Naive thymus-derived CD4-positive, alpha-beta T cell (primary cell): ENCODE measurements at regions of chr5 and their contacts with region 1.

Region 1: DNA sequence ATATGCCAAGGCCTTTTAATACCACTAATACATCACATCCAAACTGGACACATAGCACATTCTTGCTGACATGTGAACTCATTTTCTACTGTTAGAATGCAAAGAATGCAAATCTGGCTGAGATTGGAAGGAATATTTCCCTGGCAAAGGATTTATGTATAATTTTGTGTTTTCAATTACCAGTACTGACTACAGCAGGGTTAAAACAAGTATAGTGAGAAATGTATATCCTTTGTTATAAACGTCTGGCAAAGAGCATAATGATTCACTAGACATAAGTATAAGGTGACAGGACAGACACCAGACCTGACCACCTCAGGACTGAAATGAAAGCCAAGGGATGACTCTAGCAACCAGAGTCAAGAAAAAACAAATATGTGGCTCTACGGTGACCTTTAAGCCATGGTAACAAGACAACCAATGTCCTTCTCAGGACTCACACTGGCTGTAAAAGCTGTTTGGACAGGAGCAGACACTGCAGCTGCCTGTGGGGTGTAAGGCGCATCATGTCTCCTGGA is 95.0 kb downstream of the MRPS27 start:
- DNase-seq: no peak
- ATAC-seq: no peak
- H3K4me3 ChIP-seq: no peak overlapping the region
- H3K4me3 Mint-ChIP-seq: no peak overlapping the region
- H3K27ac ChIP-seq: no peak overlapping the region
- H3K27ac Mint-ChIP-seq: no peak overlapping the region
- H3K4me1 ChIP-seq: no peaks in the 10 kb centered on the region
- H3K4me1 Mint-ChIP-seq: peaks cover 0 to 5% (median 1%) of the 10 kb centered on the region in 7 donors
- H3K27me3 ChIP-seq: no peaks in the 10 kb centered on the region
- H3K27me3 Mint-ChIP-seq: no peaks in the 10 kb centered on the region

Region 2: DNA sequence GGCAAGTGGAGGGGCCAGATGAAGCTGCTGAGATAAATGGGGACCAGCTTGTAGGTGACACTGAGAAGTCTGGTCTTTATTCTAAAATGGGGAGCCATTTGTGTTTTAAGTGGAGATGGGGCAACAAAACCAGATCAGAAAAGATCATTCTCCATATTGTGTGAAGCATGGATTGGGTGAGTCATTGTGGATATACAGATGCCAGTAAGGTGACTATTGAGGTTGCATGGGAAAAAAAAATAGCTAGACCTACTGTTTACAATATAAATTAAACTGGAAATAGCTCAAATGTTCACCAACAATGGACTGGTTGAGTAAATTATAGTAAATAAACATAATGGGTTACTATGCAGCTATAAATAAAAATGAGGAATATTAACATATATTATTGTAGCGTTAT is 123.2 kb before region 1 on chr5:
- CTCF ChIA-PET with region 1: no interaction called
- POLR2A ChIA-PET with region 1: no interaction called
- intact Hi-C with region 1: loop called in 1 of 2 experiments (anchors 5 kb)
- DNase-seq: no peak
- ATAC-seq: no peak
- H3K4me3 ChIP-seq: no peak overlapping the region
- H3K4me3 Mint-ChIP-seq: no peak overlapping the region
- H3K27ac ChIP-seq: no peak overlapping the region
- H3K27ac Mint-ChIP-seq: no peak overlapping the region
- H3K4me1 ChIP-seq: no peaks in the 10 kb centered on the region
- H3K4me1 Mint-ChIP-seq: peaks cover 0 to 6% (median 4%) of the 10 kb centered on the region in 7 donors
- H3K27me3 ChIP-seq: no peaks in the 10 kb centered on the region
- H3K27me3 Mint-ChIP-seq: peaks cover 50 to 67% (median 53%) of the 10 kb centered on the region in 5 donors

Region 3: GRCh38 chr5:72776684-72777083 is 551.7 kb after region 1 on chr5:
- CTCF ChIA-PET with region 1: no interaction called
- POLR2A ChIA-PET with region 1: no interaction called
- intact Hi-C with region 1: no loop called
- DNase-seq: no peak
- ATAC-seq: no peak
- H3K4me3 ChIP-seq: no peak overlapping the region
- H3K4me3 Mint-ChIP-seq: no peak overlapping the region
- H3K27ac ChIP-seq: no peak overlapping the region
- H3K27ac Mint-ChIP-seq: no peak overlapping the region
- H3K4me1 ChIP-seq: no peaks in the 10 kb centered on the region
- H3K4me1 Mint-ChIP-seq: no peaks in the 10 kb centered on the region
- H3K27me3 ChIP-seq: no peaks in the 10 kb centered on the region
- H3K27me3 Mint-ChIP-seq: peaks cover 14 to 44% (median 25%) of the 10 kb centered on the region in 5 donors